ENCODE measurements at regions of chr11 and their contacts with region 1.

Region 1: DNA sequence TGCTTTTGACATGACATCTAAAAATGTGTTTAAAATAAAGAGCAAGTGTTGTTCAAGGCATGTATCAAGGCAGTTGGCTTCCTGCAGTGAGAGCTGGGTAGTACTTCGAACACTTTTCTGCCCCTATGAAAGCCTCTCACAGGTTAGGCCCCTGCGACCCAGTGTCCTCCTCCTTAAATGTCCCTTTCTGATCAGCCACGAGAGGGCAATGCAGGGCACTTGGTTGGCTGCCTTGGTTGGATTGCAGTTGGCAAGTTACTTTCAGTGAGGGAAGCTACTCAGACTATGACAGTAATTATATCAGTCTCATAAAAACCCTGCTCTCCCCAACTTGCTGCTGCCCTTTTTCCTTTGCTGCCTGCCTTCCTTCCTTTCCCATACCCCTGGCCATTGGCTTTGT is 743.8 kb downstream of the NTM start:
- DNase-seq: peak; percentile 55
- ATAC-seq: peak; percentile 37; the same call in 1 of the 2 replicates
- H3K4me3 ChIP-seq: no peak overlapping the region
- H3K27ac ChIP-seq: no peak overlapping the region
- H3K4me1 ChIP-seq: peaks cover 14% of the 10 kb centered on the region
- H3K27me3 ChIP-seq: no peaks in the 10 kb centered on the region
- CTCF ChIP-seq: peak; percentile 57

Region 2: GRCh38 chr11:132072044-132072857 is 41.9 kb before region 1 on chr11:
- CTCF ChIA-PET with region 1: no interaction called
- POLR2A ChIA-PET with region 1: no interaction called
- intact Hi-C with region 1: loop called (anchors 5 kb)
- DNase-seq: peak; percentile 87
- ATAC-seq: peak; percentile 87
- H3K4me3 ChIP-seq: no peak overlapping the region
- H3K27ac ChIP-seq: peak overlapping the region; percentile 83
- H3K4me1 ChIP-seq: peaks cover 22% of the 10 kb centered on the region
- H3K27me3 ChIP-seq: no peaks in the 10 kb centered on the region
- CTCF ChIP-seq: no peak

Measured in PC-3 (cell line).